SK-N-SH (cell line): ENCODE measurements at regions of chr1 and their contacts with region 1.

Region 1: GRCh38 chr1:203702130-203702577 is 62.8 kb upstream of the LAX1 start:
- DNase-seq: peak; percentile 74
- H3K4me3 ChIP-seq: no peak overlapping the region
- H3K27ac ChIP-seq: peak overlapping the region in 1 of 2 experiments; percentile 47; a peak in 1 of 4 replicates
- H3K4me1 ChIP-seq: no peaks in the 10 kb centered on the region
- H3K27me3 ChIP-seq: no peaks in the 10 kb centered on the region
- CTCF ChIP-seq: peak; percentile 91
- EP300 ChIP-seq: no peak
- RAD21 ChIP-seq: peak; percentile 98

Region 2: GRCh38 chr1:203152158-203153035 is 549.8 kb before region 1 on chr1:
- CTCF ChIA-PET with region 1: no interaction called
- POLR2A ChIA-PET with region 1: no interaction called
- DNase-seq: no peak
- H3K4me3 ChIP-seq: no peak overlapping the region
- H3K27ac ChIP-seq: no peak overlapping the region; a peak in 1 of 4 replicates
- H3K4me1 ChIP-seq: peaks cover 28 to 39% of the 10 kb centered on the region in 2 experiments
- H3K27me3 ChIP-seq: no peaks in the 10 kb centered on the region
- CTCF ChIP-seq: no peak
- EP300 ChIP-seq: peak in 1 of 2 experiments; percentile 34; a peak in 1 of 4 replicates
- RAD21 ChIP-seq: no peak

Region 3: GRCh38 chr1:203486618-203487370 is 215.4 kb before region 1 on chr1:
- CTCF ChIA-PET with region 1: interaction called, 14 read pairs
- POLR2A ChIA-PET with region 1: no interaction called
- DNase-seq: no peak
- H3K4me3 ChIP-seq: no peak overlapping the region; a peak in 1 of 4 replicates
- H3K27ac ChIP-seq: peak overlapping the region in 1 of 2 experiments; percentile 83; a peak in 2 of 4 replicates
- H3K4me1 ChIP-seq: peaks cover 0 to 11% of the 10 kb centered on the region in 2 experiments; a peak in 1 of 4 replicates
- H3K27me3 ChIP-seq: no peaks in the 10 kb centered on the region
- CTCF ChIP-seq: no peak
- EP300 ChIP-seq: no peak
- RAD21 ChIP-seq: no peak

Region 4: GRCh38 chr1:203504397-203505250 is 197.5 kb before region 1 on chr1:
- CTCF ChIA-PET with region 1: interaction called, 222 read pairs
- POLR2A ChIA-PET with region 1: interaction called, 5 read pairs
- DNase-seq: peak; percentile 86
- H3K4me3 ChIP-seq: no peak overlapping the region; a peak in 1 of 4 replicates
- H3K27ac ChIP-seq: peak overlapping the region in 1 of 2 experiments; percentile 37; a peak in 1 of 4 replicates
- H3K4me1 ChIP-seq: peaks cover 25 to 30% of the 10 kb centered on the region in 2 experiments
- H3K27me3 ChIP-seq: no peaks in the 10 kb centered on the region
- CTCF ChIP-seq: peak; percentile 87
- EP300 ChIP-seq: no peak
- RAD21 ChIP-seq: peak; percentile 92

Region 5: GRCh38 chr1:203612932-203613682 is 89.0 kb before region 1 on chr1:
- CTCF ChIA-PET with region 1: interaction called, 12 read pairs
- POLR2A ChIA-PET with region 1: no interaction called
- DNase-seq: no peak
- H3K4me3 ChIP-seq: no peak overlapping the region
- H3K27ac ChIP-seq: no peak overlapping the region
- H3K4me1 ChIP-seq: peaks cover 0 to 9% of the 10 kb centered on the region in 2 experiments; a peak in 1 of 4 replicates
- H3K27me3 ChIP-seq: no peaks in the 10 kb centered on the region
- CTCF ChIP-seq: no peak
- EP300 ChIP-seq: no peak
- RAD21 ChIP-seq: no peak

Region 6: DNA sequence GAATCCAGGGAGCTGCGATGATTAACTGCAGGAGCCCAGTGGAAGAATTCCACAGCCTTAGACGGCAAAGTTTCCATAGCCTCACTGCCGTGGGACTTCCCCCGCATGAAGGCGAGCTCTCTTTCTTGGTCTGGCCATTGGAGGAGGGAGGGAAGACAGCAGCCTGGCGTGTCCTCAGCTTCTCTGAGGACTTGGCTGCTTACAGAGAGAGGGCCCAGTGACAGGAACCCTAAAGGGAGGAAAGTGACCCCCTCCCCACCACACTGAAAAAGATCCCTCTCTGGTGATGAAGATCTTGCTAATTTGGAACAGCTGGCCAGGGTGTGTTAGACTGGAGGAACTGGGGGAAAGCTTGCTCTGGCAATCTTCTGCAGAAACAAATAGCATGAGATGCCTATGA is 34.5 kb before region 1 on chr1:
- CTCF ChIA-PET with region 1: interaction called, 11 read pairs
- POLR2A ChIA-PET with region 1: no interaction called
- DNase-seq: peak; percentile 68
- H3K4me3 ChIP-seq: no peak overlapping the region
- H3K27ac ChIP-seq: peak overlapping the region; percentile 12 to 97; a peak in 2 of 4 replicates
- H3K4me1 ChIP-seq: peaks cover 31 to 52% of the 10 kb centered on the region in 2 experiments
- H3K27me3 ChIP-seq: no peaks in the 10 kb centered on the region
- CTCF ChIP-seq: no peak
- EP300 ChIP-seq: no peak
- RAD21 ChIP-seq: no peak

Region 7: GRCh38 chr1:203794764-203795440 is 92.7 kb after region 1 on chr1:
- CTCF ChIA-PET with region 1: interaction called, 12 read pairs
- POLR2A ChIA-PET with region 1: no interaction called
- DNase-seq: no peak
- H3K4me3 ChIP-seq: peak overlapping the region; percentile 69 to 93
- H3K27ac ChIP-seq: peak overlapping the region; percentile 79 to 97
- H3K4me1 ChIP-seq: peaks cover 18 to 27% of the 10 kb centered on the region in 2 experiments; a peak in 3 of 4 replicates
- H3K27me3 ChIP-seq: no peaks in the 10 kb centered on the region
- CTCF ChIP-seq: no peak
- EP300 ChIP-seq: no peak
- RAD21 ChIP-seq: no peak